ENCODE measurements at regions of chr14 and their contacts with region 1.

Region 1: GRCh38 chr14:22472935-22473854 is 115.8 kb downstream of the DAD1 start:
- DNase-seq: peak; percentile 56 to 57
- ATAC-seq: peak; percentile 72 to 87 (median 78)
- H3K4me3 ChIP-seq: no peak overlapping the region
- H3K4me3 Mint-ChIP-seq: peak overlapping the region; percentile 91
- H3K27ac ChIP-seq: peak overlapping the region; percentile 74
- H3K27ac Mint-ChIP-seq: peak overlapping the region; percentile 80 to 89
- H3K4me1 ChIP-seq: peaks cover 91% of the 10 kb centered on the region
- H3K4me1 Mint-ChIP-seq: peaks cover 91 to 95% of the 10 kb centered on the region in 2 donors
- H3K27me3 ChIP-seq: no peaks in the 10 kb centered on the region
- H3K27me3 Mint-ChIP-seq: no peaks in the 10 kb centered on the region
- CTCF ChIP-seq: peak; percentile 73

Region 2: DNA sequence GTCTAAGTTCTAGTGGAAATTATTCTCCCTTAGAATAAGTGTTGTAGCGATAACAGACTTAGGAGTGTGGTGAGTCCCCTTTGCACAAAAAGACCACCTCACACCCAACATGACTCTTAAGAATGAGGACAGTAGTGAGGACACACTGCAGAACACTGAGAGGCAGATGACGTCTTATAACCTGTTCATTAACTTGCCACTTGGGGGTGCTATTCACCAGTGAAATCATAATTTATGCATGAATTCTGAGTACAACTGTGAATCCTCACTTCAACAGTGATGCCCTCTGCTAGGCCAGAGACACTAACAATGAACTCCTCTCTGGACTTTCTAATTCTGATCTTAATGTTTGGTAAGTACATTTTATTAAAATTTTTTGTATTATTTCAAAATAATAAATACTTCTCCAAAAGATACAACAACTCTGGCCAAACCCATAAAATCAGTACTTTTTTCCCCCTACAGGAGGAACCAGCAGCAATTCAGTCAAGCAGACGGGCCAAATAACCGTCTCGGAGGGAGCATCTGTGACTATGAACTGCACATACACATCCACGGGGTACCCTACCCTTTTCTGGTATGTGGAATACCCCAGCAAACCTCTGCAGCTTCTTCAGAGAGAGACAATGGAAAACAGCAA is 158.9 kb before region 1 on chr14:
- intact Hi-C with region 1: loop called (anchors 1 kb)
- DNase-seq: peak in 1 of 2 donors; percentile 51
- ATAC-seq: peak; percentile 83 to 98 (median 94)
- H3K4me3 ChIP-seq: no peak overlapping the region
- H3K4me3 Mint-ChIP-seq: no peak overlapping the region
- H3K27ac ChIP-seq: no peak overlapping the region
- H3K27ac Mint-ChIP-seq: no peak overlapping the region
- H3K4me1 ChIP-seq: no peaks in the 10 kb centered on the region
- H3K4me1 Mint-ChIP-seq: no peaks in the 10 kb centered on the region
- H3K27me3 ChIP-seq: no peaks in the 10 kb centered on the region
- H3K27me3 Mint-ChIP-seq: peaks cover 0 to 9% of the 10 kb centered on the region in 2 donors
- CTCF ChIP-seq: peak; percentile 73

Region 3: GRCh38 chr14:22418631-22419030 is 54.6 kb before region 1 on chr14:
- intact Hi-C with region 1: loop called (anchors 2 kb)
- DNase-seq: no peak
- ATAC-seq: peak; percentile 43 to 64 (median 55)
- H3K4me3 ChIP-seq: no peak overlapping the region
- H3K4me3 Mint-ChIP-seq: peak overlapping the region; percentile 78
- H3K27ac ChIP-seq: peak overlapping the region; percentile 75
- H3K27ac Mint-ChIP-seq: peak overlapping the region; percentile 91 to 94
- H3K4me1 ChIP-seq: peaks cover 67% of the 10 kb centered on the region
- H3K4me1 Mint-ChIP-seq: peaks cover 73 to 79% of the 10 kb centered on the region in 2 donors
- H3K27me3 ChIP-seq: no peaks in the 10 kb centered on the region
- H3K27me3 Mint-ChIP-seq: no peaks in the 10 kb centered on the region
- CTCF ChIP-seq: no peak

Region 4: GRCh38 chr14:22460461-22461195 is 12.6 kb before region 1 on chr14:
- intact Hi-C with region 1: loop called (anchors 2 kb)
- DNase-seq: peak in 1 of 2 donors; percentile 44
- ATAC-seq: peak; percentile 82 to 94 (median 92)
- H3K4me3 ChIP-seq: peak overlapping the region; percentile 62
- H3K4me3 Mint-ChIP-seq: peak overlapping the region; percentile 96
- H3K27ac ChIP-seq: peak overlapping the region; percentile 79
- H3K27ac Mint-ChIP-seq: peak overlapping the region; percentile 80 to 89
- H3K4me1 ChIP-seq: peaks cover 67% of the 10 kb centered on the region
- H3K4me1 Mint-ChIP-seq: peaks cover 93 to 98% of the 10 kb centered on the region in 2 donors
- H3K27me3 ChIP-seq: no peaks in the 10 kb centered on the region
- H3K27me3 Mint-ChIP-seq: no peaks in the 10 kb centered on the region
- CTCF ChIP-seq: no peak

Region 5: GRCh38 chr14:22497144-22497423 is 23.9 kb after region 1 on chr14:
- intact Hi-C with region 1: no loop called
- DNase-seq: peak in 1 of 2 donors; percentile 32
- ATAC-seq: peak; percentile 43 to 51 (median 44)
- H3K4me3 ChIP-seq: no peak overlapping the region
- H3K4me3 Mint-ChIP-seq: no peak overlapping the region
- H3K27ac ChIP-seq: peak overlapping the region; percentile 38
- H3K27ac Mint-ChIP-seq: peak overlapping the region; percentile 81 to 89
- H3K4me1 ChIP-seq: peaks cover 47% of the 10 kb centered on the region
- H3K4me1 Mint-ChIP-seq: peaks cover 53 to 54% of the 10 kb centered on the region in 2 donors
- H3K27me3 ChIP-seq: no peaks in the 10 kb centered on the region
- H3K27me3 Mint-ChIP-seq: no peaks in the 10 kb centered on the region
- CTCF ChIP-seq: no peak

Region 6: GRCh38 chr14:22852940-22853767 is 380.0 kb after region 1 on chr14:
- intact Hi-C with region 1: loop called (anchors 10 kb)
- DNase-seq: peak; percentile 89 to 90
- ATAC-seq: peak; percentile 93 to 95 (median 94)
- H3K4me3 ChIP-seq: peak overlapping the region; percentile 45
- H3K4me3 Mint-ChIP-seq: peak overlapping the region; percentile 75
- H3K27ac ChIP-seq: no peak overlapping the region
- H3K27ac Mint-ChIP-seq: peak overlapping the region in 1 of 2 donors; percentile 78
- H3K4me1 ChIP-seq: peaks cover 21% of the 10 kb centered on the region
- H3K4me1 Mint-ChIP-seq: peaks cover 4 to 9% of the 10 kb centered on the region in 2 donors
- H3K27me3 ChIP-seq: peaks cover 29% of the 10 kb centered on the region
- H3K27me3 Mint-ChIP-seq: peaks cover 24 to 29% of the 10 kb centered on the region in 2 donors
- CTCF ChIP-seq: peak; percentile 97

Region 7: GRCh38 chr14:23147676-23148075 is 674.5 kb after region 1 on chr14:
- intact Hi-C with region 1: no loop called
- DNase-seq: no peak
- ATAC-seq: no peak
- H3K4me3 ChIP-seq: no peak overlapping the region
- H3K4me3 Mint-ChIP-seq: no peak overlapping the region
- H3K27ac ChIP-seq: no peak overlapping the region
- H3K27ac Mint-ChIP-seq: no peak overlapping the region
- H3K4me1 ChIP-seq: no peaks in the 10 kb centered on the region
- H3K4me1 Mint-ChIP-seq: no peaks in the 10 kb centered on the region
- H3K27me3 ChIP-seq: no peaks in the 10 kb centered on the region
- H3K27me3 Mint-ChIP-seq: peaks cover 0 to 3% of the 10 kb centered on the region in 2 donors
- CTCF ChIP-seq: no peak